ENCODE measurements at regions of chr3 and their contacts with region 1.

Region 1: GRCh38 chr3:185585859-185586685 is at the start of gene SENP2:
- DNase-seq: peak; percentile 97 to 100
- H3K4me3 ChIP-seq: peak within 1 kb of the TSS; percentile 79 to 98
- H3K27ac ChIP-seq: peak within 1 kb of the TSS; percentile 93 to 97
- H3K4me1 ChIP-seq: peaks cover 10 to 12% of the 10 kb centered on the region in 2 donors
- H3K27me3 ChIP-seq: no peaks in the 10 kb centered on the region
- CTCF ChIP-seq: no peak
- total RNA-seq, gene SENP2: 44.6 TPM

Region 2: GRCh38 chr3:185362850-185363661 is 223.0 kb before region 1 on chr3 and contains the start of gene MAP3K13:
- intact Hi-C with region 1: loop called (anchors 5 kb)
- DNase-seq: peak; percentile 78 to 93
- H3K4me3 ChIP-seq: peak within 1 kb of the TSS; percentile 51 to 66
- H3K27ac ChIP-seq: peak within 1 kb of the TSS; percentile 5 to 35
- H3K4me1 ChIP-seq: peaks cover 0 to 7% of the 10 kb centered on the region in 2 donors
- H3K27me3 ChIP-seq: no peaks in the 10 kb centered on the region
- CTCF ChIP-seq: no peak
- total RNA-seq, gene MAP3K13: 21.9 TPM

Region 3: GRCh38 chr3:185498503-185499396 is 87.3 kb before region 1 on chr3 and contains the start of gene TMEM41A:
- intact Hi-C with region 1: loop called (anchors 1 kb)
- DNase-seq: peak; percentile 38 to 95
- H3K4me3 ChIP-seq: peak within 1 kb of the TSS; percentile 78 to 99
- H3K27ac ChIP-seq: peak within 1 kb of the TSS; percentile 76 to 87
- H3K4me1 ChIP-seq: peaks cover 5 to 8% of the 10 kb centered on the region in 2 donors
- H3K27me3 ChIP-seq: no peaks in the 10 kb centered on the region
- CTCF ChIP-seq: no peak
- total RNA-seq, gene TMEM41A: 24.2 TPM

Region 4: GRCh38 chr3:185659942-185660921 is 74.2 kb after region 1 on chr3:
- intact Hi-C with region 1: loop called (anchors 1 kb)
- DNase-seq: peak in 1 of 2 donors; percentile 85
- H3K4me3 ChIP-seq: peak overlapping the region in 1 of 2 donors; percentile 24
- H3K27ac ChIP-seq: peak overlapping the region in 1 of 2 donors; percentile 14
- H3K4me1 ChIP-seq: peaks cover 4 to 47% of the 10 kb centered on the region in 2 donors
- H3K27me3 ChIP-seq: no peaks in the 10 kb centered on the region
- CTCF ChIP-seq: peak; percentile 82 to 97 (median 96)

Region 5: GRCh38 chr3:185937689-185938463 is 351.8 kb after region 1 on chr3 and contains the start of gene TRA2B:
- intact Hi-C with region 1: loop called (anchors 5 kb)
- DNase-seq: peak; percentile 97 to 99
- H3K4me3 ChIP-seq: peak within 1 kb of the TSS; percentile 99
- H3K27ac ChIP-seq: peak within 1 kb of the TSS; percentile 100
- H3K4me1 ChIP-seq: peaks cover 3 to 8% of the 10 kb centered on the region in 2 donors
- H3K27me3 ChIP-seq: no peaks in the 10 kb centered on the region
- CTCF ChIP-seq: peak in 2 of 3 experiments; percentile 39 to 40
- total RNA-seq, gene TRA2B: 138 TPM

Region 6: DNA sequence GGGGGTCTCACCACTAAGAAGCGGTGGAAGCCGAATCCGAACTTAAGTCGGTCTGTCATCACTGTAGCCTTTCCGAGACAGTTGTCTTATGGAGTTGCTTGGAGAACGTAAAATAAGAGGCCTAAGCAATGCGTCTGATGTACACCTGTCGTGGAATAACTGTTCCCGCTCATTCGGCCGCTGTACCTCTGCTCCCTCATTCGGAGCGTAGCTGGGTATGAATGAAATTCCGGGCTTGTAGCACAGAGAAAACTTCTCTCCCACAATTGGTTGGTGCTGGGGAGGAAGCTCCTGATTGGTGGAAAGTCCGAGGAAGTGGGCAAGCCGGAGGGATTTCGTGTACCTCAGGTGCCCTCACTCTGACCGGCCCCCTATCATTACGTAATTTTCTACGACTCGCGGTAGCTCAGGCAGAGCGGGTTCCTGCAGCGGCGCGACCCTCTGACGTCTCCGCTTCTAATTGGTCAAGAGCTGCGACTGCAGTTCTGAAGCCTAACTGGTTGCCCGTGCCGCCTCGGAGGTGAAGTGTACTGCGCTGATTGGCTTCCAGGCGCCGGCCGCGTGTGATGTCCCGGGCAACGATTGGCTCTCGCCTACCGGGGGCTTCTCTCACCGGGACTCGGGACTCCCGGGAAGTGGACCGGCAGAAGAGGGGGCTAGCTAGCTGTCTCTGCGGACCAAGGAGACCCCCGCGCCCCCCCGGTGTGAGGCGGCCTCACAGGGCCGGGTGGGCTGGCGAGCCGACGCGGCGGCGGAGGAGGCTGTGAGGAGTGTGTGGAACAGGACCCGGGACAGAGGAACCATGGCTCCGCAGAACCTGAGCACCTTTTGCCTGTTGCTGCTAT is 984.2 kb after region 1 on chr3 and contains the start of gene DNAJB11:
- intact Hi-C with region 1: loop called (anchors 10 kb)
- DNase-seq: peak; percentile 97 to 100
- H3K4me3 ChIP-seq: peak within 1 kb of the TSS; percentile 98 to 99
- H3K27ac ChIP-seq: peak within 1 kb of the TSS; percentile 93 to 97
- H3K4me1 ChIP-seq: peaks cover 0 to 21% of the 10 kb centered on the region in 2 donors
- H3K27me3 ChIP-seq: no peaks in the 10 kb centered on the region
- CTCF ChIP-seq: no peak
- total RNA-seq, gene DNAJB11: 31.3 TPM